ENCODE measurements at regions of chr6 and their contacts with region 1.

Region 1: DNA sequence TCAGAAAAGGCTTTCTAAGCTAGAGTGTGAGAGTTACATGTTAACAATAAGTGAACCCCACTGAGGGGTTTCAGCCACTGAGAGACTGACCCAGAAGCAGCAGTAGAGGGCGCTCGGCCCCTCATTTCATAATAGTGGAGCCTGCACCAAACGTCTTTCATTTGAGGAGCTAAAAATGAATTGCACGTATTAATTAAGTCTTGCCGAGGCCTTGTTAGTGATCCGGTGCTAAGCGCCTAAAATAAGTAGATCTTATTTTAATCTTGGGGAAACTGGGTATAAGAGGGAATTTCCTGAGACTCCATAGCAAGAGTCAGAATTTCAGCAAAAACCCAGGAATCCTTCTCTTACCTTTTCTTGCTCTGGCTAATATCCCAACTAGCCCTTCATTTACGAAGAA is 209.7 kb downstream of the FARS2 start:
- DNase-seq: peak; percentile 51 to 76 (median 68)
- ATAC-seq: peak; percentile 97
- H3K4me3 ChIP-seq: no peak overlapping the region
- H3K27ac ChIP-seq: no peak overlapping the region
- H3K4me1 ChIP-seq: peaks cover 0 to 6% of the 10 kb centered on the region in 2 experiments; a peak in 2 of 5 replicates
- H3K27me3 ChIP-seq: no peaks in the 10 kb centered on the region
- CTCF ChIP-seq: peak; percentile 79 to 90 (median 89)
- EP300 ChIP-seq: no peak
- POLR2A ChIP-seq: no peak
- RAD21 ChIP-seq: peak; percentile 77 to 87

Region 2: DNA sequence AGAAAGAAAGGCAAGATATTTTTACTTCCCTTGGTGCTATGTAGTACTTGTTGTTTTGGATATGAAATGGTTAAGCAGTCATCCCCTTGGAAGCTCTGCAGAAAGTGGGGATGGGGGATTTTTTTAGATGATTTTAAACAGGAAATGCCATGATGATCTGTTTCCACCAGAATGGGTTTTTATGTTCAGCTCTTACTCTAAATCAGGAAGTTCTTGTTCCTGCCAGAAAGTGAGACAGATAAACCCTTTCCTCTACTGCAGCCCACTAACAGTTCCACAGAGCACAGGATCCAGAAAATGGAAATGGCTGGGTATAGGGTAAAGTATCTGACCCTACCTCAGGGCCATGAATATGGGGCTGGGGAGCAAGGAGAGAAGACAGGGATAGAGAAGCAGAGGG is 418.0 kb before region 1 on chr6:
- CTCF ChIA-PET with region 1: no interaction called
- POLR2A ChIA-PET with region 1: no interaction called
- in situ Hi-C with region 1: no loop called
- intact Hi-C with region 1: loop called (anchors 10 kb)
- DNase-seq: no peak
- ATAC-seq: no peak
- H3K4me3 ChIP-seq: no peak overlapping the region
- H3K27ac ChIP-seq: no peak overlapping the region
- H3K4me1 ChIP-seq: no peaks in the 10 kb centered on the region
- H3K27me3 ChIP-seq: peaks cover 0 to 9% of the 10 kb centered on the region in 2 experiments; a peak in 3 of 5 replicates
- CTCF ChIP-seq: no peak
- EP300 ChIP-seq: no peak
- POLR2A ChIP-seq: no peak
- RAD21 ChIP-seq: no peak

Region 3: GRCh38 chr6:5541751-5542432 is 70.8 kb after region 1 on chr6:
- CTCF ChIA-PET with region 1: no interaction called
- POLR2A ChIA-PET with region 1: no interaction called
- in situ Hi-C with region 1: no loop called
- intact Hi-C with region 1: no loop called
- DNase-seq: peak in 1 of 4 experiments; percentile 64
- ATAC-seq: peak; percentile 67
- H3K4me3 ChIP-seq: no peak overlapping the region
- H3K27ac ChIP-seq: peak overlapping the region; percentile 32; the same call in 2 of the 3 replicates
- H3K4me1 ChIP-seq: peaks cover 0 to 12% of the 10 kb centered on the region in 2 experiments; a peak in 2 of 5 replicates
- H3K27me3 ChIP-seq: no peaks in the 10 kb centered on the region
- CTCF ChIP-seq: no peak
- EP300 ChIP-seq: peak; percentile 57; the same call in 1 of the 2 replicates
- POLR2A ChIP-seq: no peak
- RAD21 ChIP-seq: no peak; a peak in 1 of 4 replicates

Region 4: DNA sequence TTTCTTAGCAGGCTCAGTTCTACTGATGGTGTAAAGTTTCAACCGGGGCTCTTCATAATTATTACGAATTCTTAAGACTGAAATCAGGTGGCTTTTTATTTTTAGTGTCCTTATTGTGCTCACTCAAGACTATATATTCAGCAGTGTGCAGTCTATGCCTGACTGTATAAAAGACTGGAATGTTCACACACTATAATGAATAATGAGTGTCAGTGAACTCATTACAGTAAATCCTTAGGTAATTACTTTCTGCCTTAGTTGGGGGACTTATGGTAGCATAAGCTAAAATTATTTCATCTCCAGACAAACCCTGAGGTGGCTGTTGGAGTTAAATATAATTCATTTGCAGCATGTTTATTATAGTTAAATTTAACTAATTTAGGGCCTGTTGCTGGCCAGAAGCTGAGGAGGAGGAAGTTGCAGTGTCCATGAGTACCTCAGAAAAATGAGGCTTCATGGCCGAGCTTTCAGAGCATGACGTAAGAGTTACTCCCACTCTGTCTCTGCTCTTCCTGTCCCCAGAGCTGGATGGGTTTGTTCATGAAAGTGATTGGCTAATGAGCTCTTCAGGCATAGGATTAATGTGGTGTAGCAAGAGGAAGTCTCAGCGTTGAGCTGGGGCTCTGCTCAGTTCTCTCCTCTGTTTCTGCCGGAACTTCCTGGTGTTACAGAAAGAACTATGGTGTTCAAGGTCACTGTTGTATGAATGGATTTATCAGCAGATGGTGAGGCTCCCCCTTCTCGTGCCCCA is 199.9 kb after region 1 on chr6:
- CTCF ChIA-PET with region 1: no interaction called
- POLR2A ChIA-PET with region 1: no interaction called
- in situ Hi-C with region 1: no loop called
- intact Hi-C with region 1: loop called (anchors 5 kb)
- DNase-seq: peak; percentile 24 to 67 (median 44)
- ATAC-seq: peak; percentile 87
- H3K4me3 ChIP-seq: no peak overlapping the region
- H3K27ac ChIP-seq: peak overlapping the region; percentile 40; the same call in 1 of the 3 replicates
- H3K4me1 ChIP-seq: peaks cover 0 to 17% of the 10 kb centered on the region in 2 experiments; a peak in 4 of 5 replicates
- H3K27me3 ChIP-seq: no peaks in the 10 kb centered on the region
- CTCF ChIP-seq: no peak
- EP300 ChIP-seq: no peak
- POLR2A ChIP-seq: no peak
- RAD21 ChIP-seq: no peak

Region 5: GRCh38 chr6:5764401-5764955 is 293.4 kb after region 1 on chr6:
- CTCF ChIA-PET with region 1: no interaction called
- POLR2A ChIA-PET with region 1: no interaction called
- in situ Hi-C with region 1: no loop called
- intact Hi-C with region 1: loop called (anchors 10 kb)
- DNase-seq: no peak
- ATAC-seq: no peak
- H3K4me3 ChIP-seq: no peak overlapping the region
- H3K27ac ChIP-seq: no peak overlapping the region
- H3K4me1 ChIP-seq: no peaks in the 10 kb centered on the region
- H3K27me3 ChIP-seq: peaks cover 0 to 22% of the 10 kb centered on the region in 2 experiments; a peak in 1 of 5 replicates
- CTCF ChIP-seq: no peak
- EP300 ChIP-seq: no peak
- POLR2A ChIP-seq: no peak
- RAD21 ChIP-seq: no peak

Region 6: GRCh38 chr6:6221787-6222535 is 750.9 kb after region 1 on chr6:
- CTCF ChIA-PET with region 1: no interaction called
- POLR2A ChIA-PET with region 1: no interaction called
- in situ Hi-C with region 1: no loop called
- intact Hi-C with region 1: loop called (anchors 10 kb)
- DNase-seq: peak; percentile 46 to 60 (median 52)
- ATAC-seq: peak; percentile 80
- H3K4me3 ChIP-seq: no peak overlapping the region
- H3K27ac ChIP-seq: no peak overlapping the region
- H3K4me1 ChIP-seq: no peaks in the 10 kb centered on the region; a peak in 1 of 5 replicates
- H3K27me3 ChIP-seq: no peaks in the 10 kb centered on the region; a peak in 1 of 5 replicates
- CTCF ChIP-seq: peak; percentile 60 to 62 (median 60)
- EP300 ChIP-seq: no peak
- POLR2A ChIP-seq: no peak
- RAD21 ChIP-seq: 0 out of 4 replicates have a peak, but pooled peaks of 1 of the 2 experiments have one; percentile 32